Activated naive CD4-positive, alpha-beta T cell treated with anti-CD3 and anti-CD28 coated beads for 36 hours (primary cell): ENCODE measurements at regions of chr1 and their contacts with region 1.

Region 1: DNA sequence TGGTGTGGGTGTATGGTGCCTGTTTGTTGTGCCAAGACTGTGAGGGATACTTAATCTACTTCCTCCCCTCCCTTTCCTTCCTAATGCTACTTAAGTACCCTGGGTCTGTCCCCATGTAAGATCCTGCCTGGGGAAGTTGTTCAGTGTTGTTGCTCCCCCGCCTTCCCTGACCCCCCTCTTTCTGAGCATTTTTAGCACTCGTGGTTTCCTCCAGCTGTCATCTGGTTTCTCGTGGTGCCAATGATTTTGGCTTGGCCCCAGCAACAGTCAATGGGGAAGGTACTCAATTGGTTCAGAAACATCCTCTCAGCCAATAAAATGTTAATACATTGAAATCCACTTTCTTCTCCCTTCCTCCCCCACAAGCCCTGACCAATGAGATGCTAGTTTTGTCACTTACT is 8.0 kb upstream of the B4GALT3 start:
- DNase-seq: peak; percentile 94
- H3K4me3 Mint-ChIP-seq: peak overlapping the region; percentile 67
- H3K27ac Mint-ChIP-seq: peak overlapping the region; percentile 94
- H3K4me1 Mint-ChIP-seq: peaks cover 78% of the 10 kb centered on the region
- H3K27me3 Mint-ChIP-seq: no peaks in the 10 kb centered on the region

Region 2: DNA sequence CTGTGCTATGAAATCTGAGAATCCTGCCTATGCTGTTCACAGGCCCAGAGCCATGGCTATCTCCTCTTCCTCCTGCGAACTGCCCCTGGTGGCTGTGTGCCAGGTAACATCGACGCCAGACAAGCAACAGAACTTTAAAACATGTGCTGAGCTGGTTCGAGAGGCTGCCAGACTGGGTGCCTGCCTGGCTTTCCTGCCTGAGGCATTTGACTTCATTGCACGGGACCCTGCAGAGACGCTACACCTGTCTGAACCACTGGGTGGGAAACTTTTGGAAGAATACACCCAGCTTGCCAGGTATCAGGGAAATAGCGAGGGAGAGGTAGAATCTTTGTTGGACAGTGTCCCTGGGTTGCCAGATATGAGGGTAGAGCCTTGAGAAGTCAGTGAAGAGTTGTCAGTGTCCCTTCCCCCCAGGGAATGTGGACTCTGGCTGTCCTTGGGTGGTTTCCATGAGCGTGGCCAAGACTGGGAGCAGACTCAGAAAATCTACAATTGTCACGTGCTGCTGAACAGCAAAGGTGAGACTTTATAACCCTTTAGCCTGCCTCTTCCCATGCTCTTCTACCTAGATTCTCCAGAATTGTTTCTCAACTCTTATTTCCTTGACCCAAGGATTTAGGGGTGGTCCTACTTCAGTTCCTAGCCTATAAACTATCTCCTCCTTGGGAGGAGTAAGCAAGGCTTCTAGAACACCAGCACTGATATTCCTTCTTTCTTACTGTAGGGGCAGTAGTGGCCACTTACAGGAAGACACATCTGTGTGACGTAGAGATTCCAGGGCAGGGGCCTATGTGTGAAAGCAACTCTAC is 66.0 kb before region 1 on chr1:
- CTCF ChIA-PET with region 1: no interaction called
- intact Hi-C with region 1: loop called (anchors 1 kb)
- DNase-seq: peak; percentile 86
- H3K4me3 Mint-ChIP-seq: peak overlapping the region; percentile 92
- H3K27ac Mint-ChIP-seq: peak overlapping the region; percentile 88
- H3K4me1 Mint-ChIP-seq: peaks cover 64% of the 10 kb centered on the region
- H3K27me3 Mint-ChIP-seq: no peaks in the 10 kb centered on the region

Region 3: GRCh38 chr1:161165742-161166668 is 19.3 kb before region 1 on chr1 and contains the start of gene PPOX:
- CTCF ChIA-PET with region 1: interaction called, 21 read pairs
- intact Hi-C with region 1: no loop called
- DNase-seq: peak; percentile 97
- H3K4me3 Mint-ChIP-seq: peak within 1 kb of the TSS; percentile 87
- H3K27ac Mint-ChIP-seq: peak within 1 kb of the TSS; percentile 87
- H3K4me1 Mint-ChIP-seq: peaks cover 49% of the 10 kb centered on the region
- H3K27me3 Mint-ChIP-seq: no peaks in the 10 kb centered on the region
- total RNA-seq, gene PPOX: 24.9 to 26.0 TPM

Region 4: DNA sequence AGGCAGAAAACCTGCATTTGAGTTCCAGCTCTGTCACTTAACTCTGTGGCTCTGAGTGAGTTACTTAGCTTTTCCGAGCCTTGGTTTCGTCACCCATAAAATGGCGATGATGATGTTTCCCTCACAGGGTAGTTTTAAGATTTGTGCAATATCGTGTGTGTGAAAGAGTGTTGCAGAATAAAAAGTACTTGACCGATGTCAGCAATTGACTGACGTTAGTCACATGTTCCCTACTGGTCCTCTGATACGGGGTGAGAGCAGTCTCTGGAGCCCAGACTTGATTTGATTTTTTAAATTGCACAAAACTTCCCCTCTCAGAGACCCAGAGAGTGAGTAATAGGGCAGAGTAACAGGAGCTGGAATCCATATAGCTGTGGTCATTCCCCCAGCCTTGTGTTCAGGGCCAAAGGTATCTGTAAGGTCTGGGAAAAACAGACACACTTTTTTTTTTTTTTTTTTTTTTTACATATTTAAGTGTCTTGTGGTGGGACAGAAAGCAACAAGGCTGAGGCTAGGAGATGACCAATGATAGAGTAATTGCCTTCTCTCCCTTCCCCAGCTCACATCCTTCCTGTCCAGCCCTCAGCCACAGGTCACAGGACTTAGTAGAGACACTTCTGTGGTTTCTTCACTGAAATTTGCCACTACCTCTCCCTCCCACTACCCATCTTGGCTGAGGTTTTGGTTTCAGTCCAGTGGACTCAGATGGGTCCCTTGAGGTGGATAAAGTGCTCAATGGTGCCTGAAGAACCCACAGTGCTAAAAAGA is 31.8 kb after region 1 on chr1:
- CTCF ChIA-PET with region 1: interaction called, 12 read pairs
- intact Hi-C with region 1: no loop called
- DNase-seq: no peak
- H3K4me3 Mint-ChIP-seq: no peak overlapping the region
- H3K27ac Mint-ChIP-seq: no peak overlapping the region
- H3K4me1 Mint-ChIP-seq: peaks cover 55% of the 10 kb centered on the region
- H3K27me3 Mint-ChIP-seq: no peaks in the 10 kb centered on the region

Region 5: GRCh38 chr1:161389691-161390558 is 204.6 kb after region 1 on chr1:
- CTCF ChIA-PET with region 1: interaction called, 4 read pairs
- intact Hi-C with region 1: loop called (anchors 1 kb)
- DNase-seq: peak; percentile 97
- H3K4me3 Mint-ChIP-seq: peak overlapping the region; percentile 96
- H3K27ac Mint-ChIP-seq: peak overlapping the region; percentile 95
- H3K4me1 Mint-ChIP-seq: peaks cover 50% of the 10 kb centered on the region
- H3K27me3 Mint-ChIP-seq: no peaks in the 10 kb centered on the region

Region 6: GRCh38 chr1:161905269-161905884 is 720.1 kb after region 1 on chr1:
- CTCF ChIA-PET with region 1: no interaction called
- intact Hi-C with region 1: no loop called
- DNase-seq: peak; percentile 60
- H3K4me3 Mint-ChIP-seq: no peak overlapping the region
- H3K27ac Mint-ChIP-seq: no peak overlapping the region
- H3K4me1 Mint-ChIP-seq: peaks cover 41% of the 10 kb centered on the region
- H3K27me3 Mint-ChIP-seq: no peaks in the 10 kb centered on the region